Caco-2 (cell line): ENCODE measurements at regions of chr2 and their contacts with region 1.

Region 1: GRCh38 chr2:200300648-200301314 is 5.7 kb upstream of the SPATS2L start:
- DNase-seq: no peak
- H3K4me3 ChIP-seq: no peak overlapping the region
- H3K4me3 Mint-ChIP-seq: no peak overlapping the region
- H3K27ac Mint-ChIP-seq: peak overlapping the region; percentile 39
- H3K4me1 ChIP-seq: peaks cover 48% of the 10 kb centered on the region
- H3K4me1 Mint-ChIP-seq: peaks cover 46% of the 10 kb centered on the region
- H3K27me3 ChIP-seq: no peaks in the 10 kb centered on the region
- H3K27me3 Mint-ChIP-seq: no peaks in the 10 kb centered on the region
- CTCF ChIP-seq: no peak

Region 2: DNA sequence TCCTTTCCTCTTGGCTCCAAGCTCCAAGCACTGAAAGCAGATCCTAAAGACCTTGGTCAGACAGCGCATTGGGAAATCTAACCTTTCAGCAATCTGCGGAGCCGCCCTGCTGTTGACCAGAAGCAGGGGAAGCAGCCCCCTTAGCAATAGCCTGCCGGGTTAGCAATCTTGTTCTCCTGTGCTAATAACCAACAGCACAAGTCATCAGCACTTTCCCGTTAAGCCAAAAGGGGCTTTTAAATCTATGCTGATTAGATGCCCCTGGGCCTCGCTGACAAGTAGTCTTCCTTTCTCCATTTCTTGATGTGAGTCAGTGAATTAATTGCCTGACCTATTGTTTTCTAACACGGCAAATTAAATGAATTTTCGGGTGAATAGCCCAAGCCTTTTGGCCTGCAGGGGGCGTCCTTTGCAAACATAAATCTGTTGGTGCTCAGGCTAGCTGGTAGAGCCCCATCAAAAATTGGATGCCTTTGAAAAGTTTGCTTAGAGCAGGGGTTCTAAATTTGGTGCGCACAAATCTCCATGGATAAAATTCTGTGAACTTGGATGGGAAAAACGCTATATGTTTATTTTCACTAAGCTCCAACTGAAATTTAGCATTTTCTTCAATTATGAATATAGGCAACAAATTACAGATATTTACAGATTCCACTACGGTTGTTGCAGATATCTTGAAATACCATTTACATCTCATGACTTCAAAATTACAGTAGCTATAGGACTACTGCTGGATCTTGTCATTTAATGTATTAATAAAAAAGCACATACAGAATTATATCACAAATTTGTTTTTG is 320.8 kb before region 1 on chr2:
- CTCF ChIA-PET with region 1: interaction called, 3 read pairs
- POLR2A ChIA-PET with region 1: no interaction called
- intact Hi-C with region 1: loop called (anchors 1 kb)
- DNase-seq: peak; percentile 76 to 83
- H3K4me3 ChIP-seq: no peak overlapping the region
- H3K4me3 Mint-ChIP-seq: peak overlapping the region; percentile 9
- H3K27ac Mint-ChIP-seq: no peak overlapping the region
- H3K4me1 ChIP-seq: peaks cover 20% of the 10 kb centered on the region
- H3K4me1 Mint-ChIP-seq: peaks cover 20% of the 10 kb centered on the region
- H3K27me3 ChIP-seq: no peaks in the 10 kb centered on the region
- H3K27me3 Mint-ChIP-seq: no peaks in the 10 kb centered on the region
- CTCF ChIP-seq: peak; percentile 74 to 87

Region 3: GRCh38 chr2:200077210-200077650 is 223.6 kb before region 1 on chr2:
- CTCF ChIA-PET with region 1: no interaction called
- POLR2A ChIA-PET with region 1: no interaction called
- intact Hi-C with region 1: loop called (anchors 1 kb)
- DNase-seq: peak in 1 of 2 experiments; percentile 67
- H3K4me3 ChIP-seq: no peak overlapping the region
- H3K4me3 Mint-ChIP-seq: peak overlapping the region; percentile 58
- H3K27ac Mint-ChIP-seq: peak overlapping the region; percentile 67
- H3K4me1 ChIP-seq: peaks cover 30% of the 10 kb centered on the region
- H3K4me1 Mint-ChIP-seq: peaks cover 29% of the 10 kb centered on the region
- H3K27me3 ChIP-seq: no peaks in the 10 kb centered on the region
- H3K27me3 Mint-ChIP-seq: no peaks in the 10 kb centered on the region
- CTCF ChIP-seq: no peak

Region 4: DNA sequence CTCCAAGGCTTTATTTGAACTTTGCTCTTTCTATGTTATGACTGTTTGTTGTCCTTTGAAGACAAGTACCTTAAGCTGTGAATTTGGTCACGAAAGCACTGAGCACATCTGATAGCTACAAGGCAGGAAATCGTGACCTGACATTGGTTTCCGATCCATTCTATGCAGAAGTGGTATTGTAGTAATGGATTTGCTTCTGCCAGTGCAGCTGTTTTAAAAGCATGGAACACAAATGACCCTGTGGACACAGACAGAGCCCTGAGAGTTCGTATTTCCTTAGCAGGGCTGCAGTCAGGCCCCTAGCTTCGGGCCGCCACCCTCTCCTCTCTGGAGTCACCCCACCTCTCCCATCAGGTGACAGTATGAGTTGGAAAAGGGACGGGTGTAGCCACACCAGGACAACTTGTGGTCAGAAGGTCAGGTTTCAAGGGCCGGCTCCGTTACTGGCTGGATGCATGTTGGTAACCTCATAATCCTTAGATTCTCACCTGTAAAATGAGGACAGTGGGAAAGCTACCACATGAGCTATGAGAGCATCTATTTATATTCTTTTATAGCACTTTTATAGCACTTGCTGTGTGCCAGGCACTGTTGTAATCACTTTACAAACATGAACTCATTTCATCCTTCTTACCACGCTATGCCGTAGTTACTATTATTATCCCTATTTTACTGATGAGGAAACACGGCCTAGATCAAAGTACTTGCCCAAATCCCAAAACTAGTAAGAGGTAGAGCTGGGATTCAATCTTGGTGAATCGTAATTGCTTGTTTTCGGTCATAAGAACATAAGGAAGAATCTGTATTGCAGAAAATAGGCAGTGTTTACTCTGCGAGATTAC is 76.0 kb after region 1 on chr2:
- CTCF ChIA-PET with region 1: no interaction called
- POLR2A ChIA-PET with region 1: interaction called, 11 read pairs
- intact Hi-C with region 1: loop called (anchors 1 kb)
- DNase-seq: peak in 1 of 2 experiments; percentile 57
- H3K4me3 ChIP-seq: no peak overlapping the region
- H3K4me3 Mint-ChIP-seq: peak overlapping the region; percentile 65
- H3K27ac Mint-ChIP-seq: peak overlapping the region; percentile 90
- H3K4me1 ChIP-seq: peaks cover 91% of the 10 kb centered on the region
- H3K4me1 Mint-ChIP-seq: peaks cover 74% of the 10 kb centered on the region
- H3K27me3 ChIP-seq: no peaks in the 10 kb centered on the region
- H3K27me3 Mint-ChIP-seq: no peaks in the 10 kb centered on the region
- CTCF ChIP-seq: no peak

Region 5: GRCh38 chr2:200483729-200484198 is 183.0 kb after region 1 on chr2:
- CTCF ChIA-PET with region 1: no interaction called
- POLR2A ChIA-PET with region 1: no interaction called
- intact Hi-C with region 1: loop called (anchors 5 kb)
- DNase-seq: peak; percentile 76 to 78
- H3K4me3 ChIP-seq: no peak overlapping the region
- H3K4me3 Mint-ChIP-seq: no peak overlapping the region
- H3K27ac Mint-ChIP-seq: no peak overlapping the region
- H3K4me1 ChIP-seq: peaks cover 26% of the 10 kb centered on the region
- H3K4me1 Mint-ChIP-seq: peaks cover 27% of the 10 kb centered on the region
- H3K27me3 ChIP-seq: no peaks in the 10 kb centered on the region
- H3K27me3 Mint-ChIP-seq: no peaks in the 10 kb centered on the region
- CTCF ChIP-seq: peak; percentile 52 to 85